CD4-positive, alpha-beta memory T cell (primary cell): ENCODE measurements at regions of chr9 and their contacts with region 1.

Region 1: DNA sequence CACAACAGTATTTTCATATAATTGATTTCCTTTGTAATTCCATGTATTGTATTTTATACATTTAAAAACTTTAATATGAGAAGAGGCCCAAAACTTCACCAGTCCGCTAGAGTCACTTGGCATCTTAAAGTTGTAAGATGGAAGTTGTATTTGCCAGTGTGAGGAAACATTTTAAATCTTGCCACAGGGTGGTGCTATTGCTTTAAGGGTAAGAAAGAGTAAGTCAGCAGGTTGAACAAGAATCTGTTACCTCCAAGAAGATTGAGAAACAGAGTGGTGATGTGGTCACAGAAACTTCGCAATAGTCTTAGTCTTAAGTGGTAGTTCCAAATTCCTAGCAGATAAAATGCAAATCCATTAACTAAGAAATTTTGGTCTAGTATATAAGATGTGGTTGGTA is 39.8 kb upstream of the RANBP6 start:
- DNase-seq: peak; percentile 53 to 65 (median 59)
- H3K4me3 ChIP-seq: no peak overlapping the region
- H3K4me3 Mint-ChIP-seq: no peak overlapping the region
- H3K27ac ChIP-seq: no peak overlapping the region
- H3K27ac Mint-ChIP-seq: no peak overlapping the region
- H3K4me1 ChIP-seq: no peaks in the 10 kb centered on the region
- H3K4me1 Mint-ChIP-seq: peaks cover 0 to 7% (median 2%) of the 10 kb centered on the region in 4 donors
- H3K27me3 ChIP-seq: no peaks in the 10 kb centered on the region
- H3K27me3 Mint-ChIP-seq: peaks cover 2 to 4% of the 10 kb centered on the region in 2 donors

Region 2: DNA sequence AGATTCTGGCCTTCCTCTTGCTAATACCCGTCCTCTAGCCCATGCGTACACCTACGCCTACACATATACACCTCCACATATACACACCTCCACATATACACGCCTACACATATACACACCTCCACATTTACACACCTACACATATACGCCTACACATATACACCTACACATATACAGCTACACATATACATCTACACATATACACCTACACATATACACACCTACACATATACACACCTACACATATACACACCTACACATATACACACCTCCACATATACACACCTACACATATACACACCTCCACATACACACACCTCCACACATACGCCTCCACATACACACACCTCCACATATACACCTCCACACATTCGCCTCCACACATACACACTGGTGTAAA is 1341.4 kb before region 1 on chr9:
- CTCF ChIA-PET with region 1: no interaction called
- POLR2A ChIA-PET with region 1: no interaction called
- intact Hi-C with region 1: no loop called
- DNase-seq: no peak
- H3K4me3 ChIP-seq: no peak overlapping the region
- H3K4me3 Mint-ChIP-seq: peak overlapping the region in 1 of 8 donors; percentile 1
- H3K27ac ChIP-seq: no peak overlapping the region
- H3K27ac Mint-ChIP-seq: peak overlapping the region in 4 of 7 donors; percentile 1 to 53 (median 7)
- H3K4me1 ChIP-seq: no peaks in the 10 kb centered on the region
- H3K4me1 Mint-ChIP-seq: no peaks in the 10 kb centered on the region
- H3K27me3 ChIP-seq: no peaks in the 10 kb centered on the region
- H3K27me3 Mint-ChIP-seq: no peaks in the 10 kb centered on the region

Region 3: DNA sequence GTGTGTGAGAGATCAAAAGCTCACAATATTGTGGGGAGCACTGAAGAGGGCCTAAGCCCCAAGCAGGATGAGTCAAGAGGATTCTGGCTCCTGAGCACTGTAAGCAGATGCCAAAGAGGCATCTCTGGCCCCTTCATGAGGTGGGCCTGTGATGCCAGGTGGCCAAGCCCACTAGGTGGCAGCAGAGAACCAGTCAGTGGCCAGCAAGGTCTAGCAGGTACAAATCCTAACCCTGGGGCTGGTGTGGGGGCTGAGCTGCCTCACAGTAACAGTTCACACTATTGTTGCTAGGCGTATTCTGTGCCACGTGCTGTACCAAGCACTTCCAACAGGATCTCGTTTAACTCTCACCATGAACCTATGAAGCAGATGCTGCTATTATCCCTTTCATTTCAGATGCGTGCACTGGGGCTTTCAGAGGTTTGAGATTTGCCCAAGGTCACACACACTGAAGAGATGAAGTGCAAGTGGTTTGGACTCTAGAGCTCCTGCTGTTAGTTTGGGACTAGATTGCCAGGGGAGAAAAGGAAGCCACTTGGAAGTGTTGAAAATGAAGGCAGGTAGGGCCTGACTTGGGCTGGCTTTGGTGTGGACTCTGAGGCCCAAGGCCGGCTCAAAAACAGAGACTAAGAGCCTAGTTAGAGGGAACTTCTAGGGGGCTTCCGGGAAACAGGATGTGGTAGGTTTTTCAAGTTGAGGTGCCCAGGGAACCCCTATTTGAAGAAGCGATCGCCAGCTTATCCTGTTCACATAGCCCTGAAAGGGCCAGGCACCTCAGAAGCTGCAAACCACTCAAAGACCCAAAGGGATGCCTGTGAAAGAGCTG is 168.9 kb before region 1 on chr9:
- CTCF ChIA-PET with region 1: interaction called, 65 read pairs
- POLR2A ChIA-PET with region 1: interaction called, 4 read pairs
- intact Hi-C with region 1: loop called (anchors 1 kb)
- DNase-seq: peak; percentile 61 to 74 (median 64)
- H3K4me3 ChIP-seq: no peak overlapping the region
- H3K4me3 Mint-ChIP-seq: no peak overlapping the region
- H3K27ac ChIP-seq: no peak overlapping the region
- H3K27ac Mint-ChIP-seq: peak overlapping the region in 2 of 7 donors; percentile 27 to 74
- H3K4me1 ChIP-seq: peaks cover 5% of the 10 kb centered on the region
- H3K4me1 Mint-ChIP-seq: peaks cover 5 to 6% (median 5%) of the 10 kb centered on the region in 4 donors
- H3K27me3 ChIP-seq: no peaks in the 10 kb centered on the region
- H3K27me3 Mint-ChIP-seq: no peaks in the 10 kb centered on the region

Region 4: GRCh38 chr9:5909976-5910375 is 145.2 kb before region 1 on chr9:
- CTCF ChIA-PET with region 1: no interaction called
- POLR2A ChIA-PET with region 1: no interaction called
- intact Hi-C with region 1: no loop called
- DNase-seq: no peak
- H3K4me3 ChIP-seq: no peak overlapping the region
- H3K4me3 Mint-ChIP-seq: no peak overlapping the region
- H3K27ac ChIP-seq: no peak overlapping the region
- H3K27ac Mint-ChIP-seq: no peak overlapping the region
- H3K4me1 ChIP-seq: no peaks in the 10 kb centered on the region
- H3K4me1 Mint-ChIP-seq: peaks cover 0 to 1% (median 0%) of the 10 kb centered on the region in 4 donors
- H3K27me3 ChIP-seq: no peaks in the 10 kb centered on the region
- H3K27me3 Mint-ChIP-seq: no peaks in the 10 kb centered on the region

Region 5: DNA sequence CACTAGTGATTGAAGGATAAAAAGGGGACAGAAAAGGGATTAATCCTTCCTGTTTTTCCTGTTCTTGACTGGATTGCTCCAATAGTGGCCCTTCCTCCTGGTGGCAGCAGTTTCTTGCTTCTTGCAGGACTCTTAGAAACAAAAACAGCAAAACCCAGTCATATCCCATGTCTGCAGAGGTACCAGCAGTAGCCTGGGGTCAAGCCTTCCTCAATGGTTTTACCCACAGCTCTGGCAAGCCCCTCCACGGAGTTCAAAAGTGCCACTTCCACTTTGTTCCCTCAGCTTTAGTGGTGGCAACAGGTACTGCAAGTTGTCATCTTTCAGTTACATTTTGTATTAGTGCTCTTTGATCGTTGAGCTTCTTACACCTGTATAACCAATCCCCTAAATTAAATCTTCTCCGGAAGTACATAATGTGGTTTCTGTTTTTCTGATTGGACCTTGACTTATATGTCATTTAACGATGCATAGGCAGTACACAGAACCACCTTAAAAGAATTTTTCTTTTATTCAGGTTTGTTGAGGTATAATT is 31.1 kb before region 1 on chr9:
- CTCF ChIA-PET with region 1: interaction called, 11 read pairs
- POLR2A ChIA-PET with region 1: no interaction called
- intact Hi-C with region 1: no loop called
- DNase-seq: peak in 4 of 5 donors; percentile 19 to 38 (median 30)
- H3K4me3 ChIP-seq: no peak overlapping the region
- H3K4me3 Mint-ChIP-seq: peak overlapping the region in 4 of 8 donors; percentile 36 to 65 (median 42)
- H3K27ac ChIP-seq: no peak overlapping the region
- H3K27ac Mint-ChIP-seq: peak overlapping the region in 4 of 7 donors; percentile 25 to 65 (median 59)
- H3K4me1 ChIP-seq: peaks cover 8% of the 10 kb centered on the region
- H3K4me1 Mint-ChIP-seq: peaks cover 0 to 6% (median 3%) of the 10 kb centered on the region in 4 donors
- H3K27me3 ChIP-seq: no peaks in the 10 kb centered on the region
- H3K27me3 Mint-ChIP-seq: peaks cover 3 to 6% of the 10 kb centered on the region in 2 donors

Region 6: DNA sequence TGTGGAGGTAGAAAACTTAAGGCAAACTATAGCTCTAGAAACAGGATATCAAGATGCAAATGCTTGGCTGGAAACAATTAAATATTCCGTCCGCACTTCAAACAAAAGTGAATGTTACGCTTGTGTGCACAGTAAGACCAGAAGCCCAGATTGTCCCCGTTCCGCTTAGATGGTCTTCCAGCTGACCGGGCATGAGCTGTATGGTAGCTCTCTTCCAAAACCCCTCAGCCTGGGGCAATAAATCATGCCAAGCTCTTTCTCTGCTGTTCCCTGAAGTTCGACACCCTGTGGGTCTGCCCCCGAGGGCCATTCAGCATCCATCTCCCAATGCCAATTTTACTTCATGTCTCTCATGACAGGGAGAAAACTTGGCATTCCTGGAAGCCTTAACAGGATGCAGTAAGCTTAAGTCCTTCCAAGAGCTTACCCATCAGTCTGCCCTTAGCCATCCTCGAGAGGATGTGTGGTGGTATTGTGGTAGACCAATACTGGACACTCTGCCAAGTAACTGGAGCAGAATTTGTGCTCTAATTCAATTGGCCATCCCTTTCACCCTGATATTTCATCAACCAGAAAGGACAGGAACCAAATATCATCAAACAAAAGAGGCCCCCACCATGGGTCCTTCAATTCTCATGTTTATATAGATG is 30.9 kb after region 1 on chr9:
- CTCF ChIA-PET with region 1: no interaction called
- POLR2A ChIA-PET with region 1: no interaction called
- intact Hi-C with region 1: no loop called
- DNase-seq: no peak
- H3K4me3 ChIP-seq: no peak overlapping the region
- H3K4me3 Mint-ChIP-seq: no peak overlapping the region
- H3K27ac ChIP-seq: no peak overlapping the region
- H3K27ac Mint-ChIP-seq: no peak overlapping the region
- H3K4me1 ChIP-seq: no peaks in the 10 kb centered on the region
- H3K4me1 Mint-ChIP-seq: no peaks in the 10 kb centered on the region
- H3K27me3 ChIP-seq: no peaks in the 10 kb centered on the region
- H3K27me3 Mint-ChIP-seq: peaks cover 1 to 2% of the 10 kb centered on the region in 2 donors

Region 7: DNA sequence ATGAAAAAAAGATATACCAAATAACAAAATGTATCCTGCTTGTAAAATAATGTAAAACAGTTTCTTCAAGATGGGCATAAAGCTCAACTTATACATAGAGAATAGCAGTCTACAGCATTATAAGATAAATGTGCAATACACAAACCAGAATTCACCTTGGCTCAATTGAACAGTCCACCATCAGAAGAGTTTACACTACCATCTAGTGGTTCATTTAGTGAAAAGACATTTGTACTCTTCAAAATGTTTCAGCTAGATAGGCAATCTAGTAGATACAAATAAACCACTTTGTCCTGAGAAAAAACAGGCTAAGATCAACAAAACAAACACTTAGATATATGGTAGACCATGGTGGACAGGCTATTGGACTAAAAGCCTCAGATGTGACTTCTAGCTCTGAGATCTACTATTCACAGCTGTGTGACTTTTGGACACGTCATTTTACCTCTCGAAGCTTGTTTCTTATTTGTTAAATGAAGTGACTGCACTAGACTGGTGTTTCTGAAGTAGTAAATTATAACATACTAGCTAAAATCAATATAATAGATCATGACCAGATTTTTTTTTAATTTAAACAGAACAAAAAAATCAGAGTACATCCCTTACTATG is 250.8 kb after region 1 on chr9:
- CTCF ChIA-PET with region 1: interaction called, 17 read pairs
- POLR2A ChIA-PET with region 1: no interaction called
- intact Hi-C with region 1: no loop called
- DNase-seq: peak in 4 of 5 donors; percentile 5 to 13 (median 10)
- H3K4me3 ChIP-seq: no peak overlapping the region
- H3K4me3 Mint-ChIP-seq: no peak overlapping the region
- H3K27ac ChIP-seq: no peak overlapping the region
- H3K27ac Mint-ChIP-seq: no peak overlapping the region
- H3K4me1 ChIP-seq: no peaks in the 10 kb centered on the region
- H3K4me1 Mint-ChIP-seq: no peaks in the 10 kb centered on the region
- H3K27me3 ChIP-seq: peaks cover 10% of the 10 kb centered on the region
- H3K27me3 Mint-ChIP-seq: peaks cover 7 to 8% of the 10 kb centered on the region in 2 donors

Region 8: GRCh38 chr9:6584881-6585597 is 529.8 kb after region 1 on chr9:
- CTCF ChIA-PET with region 1: no interaction called
- POLR2A ChIA-PET with region 1: no interaction called
- intact Hi-C with region 1: loop called (anchors 5 kb)
- DNase-seq: peak in 4 of 5 donors; percentile 16 to 31 (median 24)
- H3K4me3 ChIP-seq: no peak overlapping the region
- H3K4me3 Mint-ChIP-seq: no peak overlapping the region
- H3K27ac ChIP-seq: no peak overlapping the region
- H3K27ac Mint-ChIP-seq: no peak overlapping the region
- H3K4me1 ChIP-seq: no peaks in the 10 kb centered on the region
- H3K4me1 Mint-ChIP-seq: no peaks in the 10 kb centered on the region
- H3K27me3 ChIP-seq: no peaks in the 10 kb centered on the region
- H3K27me3 Mint-ChIP-seq: no peaks in the 10 kb centered on the region